Mammary epithelial cell (primary cell): ENCODE measurements at regions of chr1 and their contacts with region 1.

Region 1: DNA sequence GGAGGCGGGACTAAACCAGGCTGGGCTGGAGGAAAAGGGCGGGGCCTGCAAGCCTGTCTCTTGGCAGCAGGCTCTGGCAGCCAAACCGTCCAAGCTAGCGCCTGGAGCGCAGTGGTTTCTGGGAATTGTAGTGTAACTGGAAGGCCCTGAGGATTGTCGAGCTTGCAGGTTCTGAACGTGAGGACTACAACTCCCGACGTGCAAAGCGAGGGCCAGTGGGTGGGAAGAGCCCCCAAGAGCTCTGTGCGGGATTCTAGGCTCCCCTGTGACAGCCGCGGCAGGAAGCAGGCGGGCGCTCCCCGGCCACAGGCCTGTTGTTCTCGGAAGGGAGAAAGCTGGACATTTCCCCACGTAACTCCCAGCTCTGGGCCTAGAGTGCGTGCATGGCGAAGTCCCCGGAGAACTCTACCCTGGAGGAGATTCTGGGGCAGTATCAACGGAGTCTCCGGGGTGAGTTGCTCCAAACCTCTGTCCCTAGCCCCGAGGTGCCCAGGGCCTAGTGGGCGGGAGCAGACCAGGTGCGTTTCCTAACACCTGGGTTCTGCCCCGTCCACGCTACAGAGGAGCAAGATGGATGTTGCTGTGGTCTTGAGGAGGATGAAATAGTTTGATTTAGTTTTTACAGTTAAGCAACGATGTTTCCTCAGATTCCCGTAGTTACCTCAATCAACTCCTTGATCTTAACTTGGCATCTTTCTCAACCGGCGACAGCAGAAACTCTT is at the start of gene SDCCAG8:
- DNase-seq: peak; percentile 99
- H3K4me3 ChIP-seq: peak within 1 kb of the TSS; percentile 78 to 95 (median 79)
- H3K27ac ChIP-seq: peak within 1 kb of the TSS; percentile 61
- H3K4me1 ChIP-seq: peaks cover 20% of the 10 kb centered on the region
- H3K27me3 ChIP-seq: no peaks in the 10 kb centered on the region
- CTCF ChIP-seq: no peak
- total RNA-seq, gene SDCCAG8: 34.7 to 42.1 TPM

Region 2: GRCh38 chr1:243287652-243288051 is 31.7 kb after region 1 on chr1:
- CTCF ChIA-PET with region 1: no interaction called
- dilution Hi-C with region 1: no loop called
- in situ Hi-C with region 1: no loop called
- intact Hi-C with region 1: loop called (anchors 2 kb)
- DNase-seq: peak; percentile 88
- H3K4me3 ChIP-seq: no peak overlapping the region
- H3K27ac ChIP-seq: peak overlapping the region; percentile 74
- H3K4me1 ChIP-seq: peaks cover 21% of the 10 kb centered on the region
- H3K27me3 ChIP-seq: no peaks in the 10 kb centered on the region
- CTCF ChIP-seq: no peak

Region 3: DNA sequence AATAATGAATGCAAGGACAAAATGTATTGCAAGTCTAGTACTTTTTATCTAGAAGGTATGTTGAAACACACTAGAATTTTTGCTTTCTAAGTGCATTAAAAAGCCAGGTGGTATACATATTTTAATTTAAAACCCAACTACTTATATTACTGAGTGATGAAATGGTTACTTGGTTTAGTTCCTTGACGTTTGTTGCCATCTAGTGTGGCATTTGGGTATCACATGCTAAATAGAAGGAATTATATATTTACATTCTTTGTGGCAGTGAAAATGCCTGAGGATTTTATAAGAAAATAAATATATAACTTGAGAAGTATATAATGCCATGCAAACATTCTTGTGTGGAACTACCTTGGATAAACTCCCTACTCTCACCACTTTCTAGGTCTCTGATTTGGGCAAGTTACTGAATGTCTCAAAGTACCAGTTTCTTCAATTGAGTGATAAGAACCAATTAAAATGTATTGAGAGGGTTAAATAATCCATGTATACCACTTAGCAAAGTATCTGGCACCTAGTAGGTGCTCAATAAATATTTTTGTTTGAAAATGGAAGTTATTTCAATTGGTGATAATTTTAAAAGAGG is 69.4 kb after region 1 on chr1:
- CTCF ChIA-PET with region 1: no interaction called
- dilution Hi-C with region 1: no loop called
- in situ Hi-C with region 1: no loop called
- intact Hi-C with region 1: loop called (anchors 2 kb)
- DNase-seq: peak; percentile 25
- H3K4me3 ChIP-seq: no peak overlapping the region
- H3K27ac ChIP-seq: no peak overlapping the region
- H3K4me1 ChIP-seq: no peaks in the 10 kb centered on the region
- H3K27me3 ChIP-seq: no peaks in the 10 kb centered on the region
- CTCF ChIP-seq: peak; percentile 67 to 74